ENCODE measurements at regions of chr15 and their contacts with region 1.

Region 1: GRCh38 chr15:91422704-91423254 is 322.7 kb downstream of the SV2B start:
- DNase-seq: peak in 4 of 9 donors; percentile 5 to 45 (median 14)
- ATAC-seq: peak; percentile 61
- H3K4me3 ChIP-seq: no peak overlapping the region
- H3K4me3 Mint-ChIP-seq: peak overlapping the region in 7 of 10 donors; percentile 1 to 79 (median 54)
- H3K27ac ChIP-seq: no peak overlapping the region
- H3K27ac Mint-ChIP-seq: peak overlapping the region in 8 of 9 donors; percentile 19 to 91 (median 68)
- H3K4me1 ChIP-seq: peaks cover 26 to 28% of the 10 kb centered on the region in 2 donors
- H3K4me1 Mint-ChIP-seq: peaks cover 9 to 56% (median 26%) of the 10 kb centered on the region in 7 donors
- H3K27me3 ChIP-seq: no peaks in the 10 kb centered on the region
- H3K27me3 Mint-ChIP-seq: peaks cover 0 to 19% (median 0%) of the 10 kb centered on the region in 5 donors

Region 2: GRCh38 chr15:91224755-91225380 is 197.9 kb before region 1 on chr15:
- CTCF ChIA-PET with region 1: no interaction called
- POLR2A ChIA-PET with region 1: no interaction called
- intact Hi-C with region 1: no loop called
- DNase-seq: no peak
- ATAC-seq: no peak
- H3K4me3 ChIP-seq: no peak overlapping the region
- H3K4me3 Mint-ChIP-seq: no peak overlapping the region
- H3K27ac ChIP-seq: no peak overlapping the region
- H3K27ac Mint-ChIP-seq: no peak overlapping the region
- H3K4me1 ChIP-seq: no peaks in the 10 kb centered on the region
- H3K4me1 Mint-ChIP-seq: peaks cover 0 to 2% (median 0%) of the 10 kb centered on the region in 7 donors
- H3K27me3 ChIP-seq: peaks cover 0 to 7% of the 10 kb centered on the region in 2 donors
- H3K27me3 Mint-ChIP-seq: peaks cover 26 to 53% (median 52%) of the 10 kb centered on the region in 5 donors

Region 3: GRCh38 chr15:91522663-91523332 is 100.0 kb after region 1 on chr15:
- CTCF ChIA-PET with region 1: no interaction called
- POLR2A ChIA-PET with region 1: no interaction called
- intact Hi-C with region 1: loop called in 1 of 2 experiments (anchors 1 kb)
- DNase-seq: peak in 7 of 9 donors; percentile 12 to 54 (median 33)
- ATAC-seq: peak; percentile 41
- H3K4me3 ChIP-seq: no peak overlapping the region
- H3K4me3 Mint-ChIP-seq: peak overlapping the region in 1 of 10 donors; percentile 15
- H3K27ac ChIP-seq: no peak overlapping the region
- H3K27ac Mint-ChIP-seq: peak overlapping the region in 4 of 9 donors; percentile 22 to 75 (median 66)
- H3K4me1 ChIP-seq: peaks cover 9 to 12% of the 10 kb centered on the region in 2 donors
- H3K4me1 Mint-ChIP-seq: peaks cover 9 to 56% (median 18%) of the 10 kb centered on the region in 7 donors
- H3K27me3 ChIP-seq: no peaks in the 10 kb centered on the region
- H3K27me3 Mint-ChIP-seq: peaks cover 0 to 13% (median 0%) of the 10 kb centered on the region in 5 donors

Region 4: DNA sequence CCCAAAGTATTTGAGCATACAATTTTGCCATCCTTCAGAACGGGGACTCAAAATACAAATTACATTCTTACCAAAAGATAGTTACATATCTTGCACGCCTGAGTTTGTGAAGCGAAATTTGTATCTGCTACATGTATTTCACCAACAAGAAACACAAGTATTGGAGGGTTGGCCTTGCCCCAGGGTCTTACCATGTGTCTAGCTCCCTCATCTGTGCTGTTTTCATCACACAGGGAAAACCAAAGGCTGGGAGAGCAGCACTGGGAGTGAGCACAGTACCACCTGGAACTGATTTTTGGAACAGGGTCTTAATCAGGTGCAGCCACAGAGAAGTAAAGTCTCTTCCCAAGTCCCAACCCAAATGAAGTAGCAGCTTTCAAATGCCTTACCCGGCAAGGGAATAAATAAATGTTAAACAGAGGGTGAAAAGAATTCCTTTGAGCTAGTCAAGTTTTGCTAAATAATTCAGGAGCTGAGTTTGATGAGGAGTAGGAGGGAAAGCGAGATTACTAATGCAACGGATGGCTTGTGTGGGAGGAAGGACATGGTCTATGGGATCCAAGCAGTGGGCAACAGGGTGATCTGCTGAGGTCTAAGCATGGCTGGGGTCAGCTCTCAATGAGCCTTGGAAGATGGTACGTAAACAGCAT is 766.3 kb after region 1 on chr15:
- CTCF ChIA-PET with region 1: no interaction called
- POLR2A ChIA-PET with region 1: no interaction called
- intact Hi-C with region 1: no loop called
- DNase-seq: no peak
- ATAC-seq: no peak
- H3K4me3 ChIP-seq: no peak overlapping the region
- H3K4me3 Mint-ChIP-seq: no peak overlapping the region
- H3K27ac ChIP-seq: no peak overlapping the region
- H3K27ac Mint-ChIP-seq: no peak overlapping the region
- H3K4me1 ChIP-seq: no peaks in the 10 kb centered on the region
- H3K4me1 Mint-ChIP-seq: no peaks in the 10 kb centered on the region
- H3K27me3 ChIP-seq: no peaks in the 10 kb centered on the region
- H3K27me3 Mint-ChIP-seq: peaks cover 7 to 21% (median 19%) of the 10 kb centered on the region in 5 donors